ENCODE measurements at regions of chr15 and their contacts with region 1.

Region 1: GRCh38 chr15:62940755-62941361 is 101.7 kb upstream of the TPM1 start:
- DNase-seq: no peak
- H3K4me3 ChIP-seq: no peak overlapping the region
- H3K27ac ChIP-seq: peak overlapping the region; percentile 33 to 54
- H3K4me1 ChIP-seq: no peaks in the 10 kb centered on the region
- H3K27me3 ChIP-seq: no peaks in the 10 kb centered on the region
- CTCF ChIP-seq: no peak
- POLR2A ChIP-seq: no peak

Region 2: GRCh38 chr15:63025461-63025860 is 84.6 kb after region 1 on chr15:
- intact Hi-C with region 1: loop called (anchors 5 kb)
- DNase-seq: no peak
- H3K4me3 ChIP-seq: no peak overlapping the region
- H3K27ac ChIP-seq: no peak overlapping the region
- H3K4me1 ChIP-seq: no peaks in the 10 kb centered on the region
- H3K27me3 ChIP-seq: no peaks in the 10 kb centered on the region
- CTCF ChIP-seq: no peak
- POLR2A ChIP-seq: no peak

Measured in prostate gland (tissue), 2 donors.